HEK293 (cell line): ENCODE measurements at regions of chr1 and their contacts with region 1.

Region 1: DNA sequence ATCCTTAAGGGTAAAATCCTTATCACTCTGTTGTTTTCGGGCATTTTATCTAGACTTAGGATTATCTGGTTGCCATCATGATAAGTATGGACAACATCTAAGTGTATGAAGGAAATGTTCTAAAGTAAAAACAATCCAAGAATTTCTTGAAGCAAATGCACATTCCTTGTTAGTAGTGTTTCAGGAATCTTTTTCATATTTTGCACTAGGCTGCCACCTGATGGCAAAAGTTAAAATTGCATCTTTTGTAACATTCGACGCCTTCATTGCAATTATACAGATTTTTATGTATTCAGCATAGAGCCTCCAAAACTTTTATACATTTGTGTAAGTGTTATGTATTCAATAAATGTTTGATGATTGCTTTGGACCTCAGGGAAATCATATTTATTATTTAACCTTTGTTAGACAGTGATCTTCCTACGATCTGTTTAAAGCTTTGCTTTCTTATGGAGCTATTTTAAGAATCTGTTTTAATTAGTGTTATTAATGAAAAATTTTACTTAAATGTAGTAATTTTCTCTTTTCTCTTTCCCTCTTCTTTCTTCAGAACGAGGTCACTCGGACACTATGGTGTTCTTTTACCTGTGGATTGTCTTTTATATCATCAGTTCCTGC is 49.4 kb upstream of the KIAA1614 start:
- H3K4me3 ChIP-seq: no peak overlapping the region
- H3K27ac ChIP-seq: no peak overlapping the region
- H3K4me1 ChIP-seq: no peaks in the 10 kb centered on the region
- CTCF ChIP-seq: no peak

Region 2: GRCh38 chr1:180515864-180516388 is 347.3 kb before region 1 on chr1:
- CTCF ChIA-PET with region 1: interaction called, 137 read pairs
- POLR2A ChIA-PET with region 1: no interaction called
- H3K4me3 ChIP-seq: no peak overlapping the region
- H3K27ac ChIP-seq: no peak overlapping the region
- H3K4me1 ChIP-seq: no peaks in the 10 kb centered on the region
- CTCF ChIP-seq: peak; percentile 74

Region 3: DNA sequence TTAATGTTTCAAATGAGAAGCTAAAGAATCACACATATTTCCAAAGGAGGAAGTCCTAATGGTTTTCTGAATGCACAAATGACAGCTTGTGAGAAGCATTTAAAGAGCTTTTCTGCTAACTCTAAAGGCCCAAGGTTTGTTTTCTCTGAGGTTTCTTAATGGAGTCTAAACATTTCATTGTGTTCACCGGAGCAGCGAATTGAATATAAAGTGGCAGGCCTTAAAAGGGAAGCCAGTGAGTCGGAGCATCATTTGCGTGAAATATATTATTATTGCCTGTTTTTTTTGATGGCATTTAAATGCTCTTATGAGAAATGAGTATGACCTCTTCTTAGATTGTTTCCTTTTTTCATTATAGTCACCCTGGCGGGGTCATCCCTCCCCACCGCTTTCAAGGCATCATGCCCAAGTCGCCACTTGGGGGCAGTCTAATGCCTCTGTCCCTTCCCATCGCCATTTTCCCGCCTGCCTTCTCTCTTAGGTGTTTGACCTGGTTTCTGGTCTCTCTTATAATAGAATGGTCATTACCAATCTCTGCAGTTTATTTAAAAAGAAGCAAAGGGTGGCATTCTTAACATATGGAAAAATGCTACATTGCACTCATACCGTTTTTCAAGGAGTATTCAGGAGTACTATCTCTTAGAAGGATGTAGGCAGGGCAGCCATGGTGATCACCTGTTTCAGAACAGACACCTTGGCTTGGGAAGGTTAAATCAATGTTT is 329.8 kb before region 1 on chr1:
- CTCF ChIA-PET with region 1: interaction called, 134 read pairs
- POLR2A ChIA-PET with region 1: no interaction called
- H3K4me3 ChIP-seq: no peak overlapping the region
- H3K27ac ChIP-seq: no peak overlapping the region
- H3K4me1 ChIP-seq: no peaks in the 10 kb centered on the region
- CTCF ChIP-seq: 0 out of 2 replicates have a peak, but pooled peaks have one; percentile 7

Region 4: GRCh38 chr1:180636138-180636537 is 227.1 kb before region 1 on chr1:
- CTCF ChIA-PET with region 1: interaction called, 24 read pairs
- POLR2A ChIA-PET with region 1: interaction called, 3 read pairs
- H3K4me3 ChIP-seq: no peak overlapping the region
- H3K27ac ChIP-seq: no peak overlapping the region
- H3K4me1 ChIP-seq: peaks cover 4% of the 10 kb centered on the region
- CTCF ChIP-seq: no peak

Region 5: DNA sequence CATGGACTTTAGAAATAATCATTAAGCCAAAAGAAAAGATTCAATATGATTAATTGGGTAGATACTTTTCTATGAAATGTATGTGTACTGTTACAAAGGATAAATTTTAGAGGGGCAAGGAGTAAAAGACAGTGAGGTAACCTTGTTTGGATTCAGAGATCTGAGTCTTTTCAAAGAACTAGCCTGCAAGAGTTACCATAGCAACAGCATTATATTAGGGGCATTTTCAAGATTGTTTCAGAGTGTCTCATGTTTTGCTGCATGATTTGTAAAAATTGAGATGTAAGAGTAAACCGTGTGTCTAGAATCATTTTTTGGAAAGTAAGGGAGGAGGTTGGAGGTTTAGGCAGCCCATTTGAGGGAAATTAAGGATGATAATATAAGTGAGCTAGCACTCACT is 21.2 kb before region 1 on chr1:
- CTCF ChIA-PET with region 1: interaction called, 10 read pairs
- POLR2A ChIA-PET with region 1: no interaction called
- H3K4me3 ChIP-seq: no peak overlapping the region
- H3K27ac ChIP-seq: no peak overlapping the region
- H3K4me1 ChIP-seq: peaks cover 4% of the 10 kb centered on the region
- CTCF ChIP-seq: no peak

Region 6: DNA sequence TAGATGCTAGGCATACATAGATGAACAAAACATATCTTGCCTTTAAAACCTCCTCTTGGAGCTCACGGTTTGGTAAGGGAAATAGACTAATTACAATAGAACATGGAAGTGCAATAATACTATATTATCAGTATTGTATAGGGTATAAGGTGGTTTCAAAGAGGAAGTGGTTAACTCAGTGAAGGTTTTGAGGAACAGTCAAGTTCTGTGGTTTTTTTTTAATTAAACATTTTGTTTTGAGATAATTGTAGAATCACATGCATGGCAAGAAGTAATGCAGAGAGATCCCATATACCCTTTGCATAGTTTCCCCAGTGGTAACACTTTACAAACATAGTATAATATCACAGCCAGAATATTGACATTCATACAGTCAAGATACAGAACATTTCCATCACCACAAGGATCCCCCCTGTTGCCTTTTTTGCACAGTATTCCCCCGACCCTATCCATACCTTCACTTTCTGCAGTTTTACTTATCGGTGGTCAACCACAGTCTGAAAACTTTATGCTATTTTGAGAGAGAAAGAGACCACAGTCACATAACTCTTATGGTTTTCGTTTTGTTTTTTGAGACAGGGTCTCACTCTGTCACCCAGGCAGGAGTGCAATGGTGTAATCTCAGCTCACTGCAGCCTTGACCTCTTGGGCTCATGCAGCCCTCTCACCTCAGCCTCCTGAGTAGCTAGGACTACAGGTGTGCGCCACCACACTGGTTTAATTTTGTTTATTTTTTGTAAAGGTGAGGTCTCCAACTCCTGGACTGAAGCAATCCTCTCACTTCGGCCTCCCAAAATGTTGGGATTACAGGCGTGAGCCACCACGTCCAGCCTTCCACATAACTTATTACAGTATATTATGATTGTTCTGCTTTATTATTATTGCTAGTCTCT is 11.0 kb before region 1 on chr1:
- CTCF ChIA-PET with region 1: interaction called, 10 read pairs
- POLR2A ChIA-PET with region 1: no interaction called
- H3K4me3 ChIP-seq: no peak overlapping the region
- H3K27ac ChIP-seq: no peak overlapping the region
- H3K4me1 ChIP-seq: no peaks in the 10 kb centered on the region
- CTCF ChIP-seq: no peak